Naive thymus-derived CD4-positive, alpha-beta T cell (primary cell): ENCODE measurements at regions of chr11 and their contacts with region 1.

Region 1: GRCh38 chr11:85664615-85665481 is at the start of gene CREBZF:
- DNase-seq: peak; percentile 83 to 96 (median 92)
- ATAC-seq: peak; percentile 85
- H3K4me3 ChIP-seq: peak within 1 kb of the TSS; percentile 97
- H3K4me3 Mint-ChIP-seq: peak within 1 kb of the TSS; percentile 93 to 100 (median 99)
- H3K27ac ChIP-seq: peak within 1 kb of the TSS; percentile 99
- H3K27ac Mint-ChIP-seq: peak within 1 kb of the TSS; percentile 96 to 100 (median 99)
- H3K4me1 ChIP-seq: peaks cover 19 to 31% of the 10 kb centered on the region in 2 donors
- H3K4me1 Mint-ChIP-seq: peaks cover 29 to 55% (median 39%) of the 10 kb centered on the region in 7 donors
- H3K27me3 ChIP-seq: no peaks in the 10 kb centered on the region
- H3K27me3 Mint-ChIP-seq: peaks cover 0 to 5% (median 0%) of the 10 kb centered on the region in 5 donors
- total RNA-seq, gene CREBZF: 56.9 to 114 (median 59.7) TPM

Region 2: DNA sequence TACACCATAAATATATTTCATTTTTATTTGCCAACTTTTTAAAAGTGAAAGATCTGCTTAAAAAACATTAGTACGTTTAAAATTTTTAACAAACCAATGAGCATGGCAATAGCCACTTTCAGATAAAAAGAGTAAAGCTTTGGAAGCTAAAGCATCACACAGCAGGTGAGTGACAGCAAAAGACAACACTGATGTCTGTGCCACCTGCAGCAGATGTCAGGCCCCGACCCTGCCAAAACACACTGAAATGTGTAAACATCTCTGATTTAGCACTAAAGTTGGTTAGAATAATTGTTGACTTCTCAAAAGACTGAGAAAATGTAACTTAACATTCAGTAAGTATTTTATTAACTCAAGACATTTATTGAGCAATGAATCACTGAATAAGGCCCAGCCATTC is 270.6 kb before region 1 on chr11:
- CTCF ChIA-PET with region 1: no interaction called
- POLR2A ChIA-PET with region 1: no interaction called
- intact Hi-C with region 1: no loop called
- DNase-seq: no peak
- ATAC-seq: no peak
- H3K4me3 ChIP-seq: no peak overlapping the region
- H3K4me3 Mint-ChIP-seq: no peak overlapping the region
- H3K27ac ChIP-seq: no peak overlapping the region
- H3K27ac Mint-ChIP-seq: no peak overlapping the region
- H3K4me1 ChIP-seq: no peaks in the 10 kb centered on the region
- H3K4me1 Mint-ChIP-seq: no peaks in the 10 kb centered on the region
- H3K27me3 ChIP-seq: no peaks in the 10 kb centered on the region
- H3K27me3 Mint-ChIP-seq: no peaks in the 10 kb centered on the region

Region 3: DNA sequence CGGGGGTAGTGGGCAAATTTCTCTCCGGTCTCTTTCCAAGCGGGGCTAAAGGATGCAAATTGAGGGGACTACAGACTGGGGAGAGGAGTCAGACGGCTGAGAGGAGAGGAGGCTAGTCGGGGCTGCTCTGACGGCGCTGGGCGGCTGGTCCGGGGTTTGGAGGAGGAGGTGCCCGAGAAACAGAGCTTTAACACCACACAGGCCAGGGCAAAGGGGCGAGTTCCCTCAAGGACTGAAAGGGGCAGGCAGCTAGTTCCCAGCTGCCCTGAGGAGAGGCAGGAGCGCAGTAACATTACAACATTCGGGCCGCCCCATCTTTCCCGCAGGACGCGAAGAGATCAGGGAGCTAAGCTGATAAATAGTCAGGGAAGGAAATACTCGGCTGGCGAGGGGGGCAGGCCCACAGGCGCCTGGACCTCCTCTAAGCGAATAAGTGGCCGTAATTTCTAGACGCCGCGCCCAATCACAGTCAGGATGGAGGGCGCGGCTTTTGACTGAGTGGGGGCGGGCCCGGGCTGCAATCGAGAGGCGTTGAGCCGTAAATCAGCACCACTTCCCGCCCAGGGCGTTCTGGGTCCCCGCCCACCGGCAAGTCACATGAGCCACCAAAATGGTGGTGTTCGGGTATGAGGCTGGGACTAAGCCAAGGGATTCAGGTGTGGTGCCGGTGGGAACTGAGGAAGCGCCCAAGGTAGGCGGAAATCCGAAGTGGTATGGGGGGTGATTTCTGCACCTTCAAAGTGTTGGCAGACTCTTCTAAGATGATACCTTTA is 36.7 kb before region 1 on chr11 and contains the start of gene TMEM126B:
- CTCF ChIA-PET with region 1: no interaction called
- POLR2A ChIA-PET with region 1: interaction called, 32 read pairs
- intact Hi-C with region 1: loop called (anchors 1 kb)
- DNase-seq: peak; percentile 85 to 95 (median 94)
- ATAC-seq: peak; percentile 99
- H3K4me3 ChIP-seq: peak within 1 kb of the TSS; percentile 98
- H3K4me3 Mint-ChIP-seq: peak within 1 kb of the TSS; percentile 84 to 98 (median 94)
- H3K27ac ChIP-seq: peak within 1 kb of the TSS; percentile 85
- H3K27ac Mint-ChIP-seq: peak within 1 kb of the TSS; percentile 89 to 97 (median 94)
- H3K4me1 ChIP-seq: peaks cover 13 to 22% of the 10 kb centered on the region in 2 donors
- H3K4me1 Mint-ChIP-seq: peaks cover 17 to 67% (median 48%) of the 10 kb centered on the region in 7 donors
- H3K27me3 ChIP-seq: no peaks in the 10 kb centered on the region
- H3K27me3 Mint-ChIP-seq: peaks cover 0 to 9% (median 0%) of the 10 kb centered on the region in 5 donors
- total RNA-seq, gene TMEM126B: 22.1 to 50.4 (median 36.4) TPM

Region 4: DNA sequence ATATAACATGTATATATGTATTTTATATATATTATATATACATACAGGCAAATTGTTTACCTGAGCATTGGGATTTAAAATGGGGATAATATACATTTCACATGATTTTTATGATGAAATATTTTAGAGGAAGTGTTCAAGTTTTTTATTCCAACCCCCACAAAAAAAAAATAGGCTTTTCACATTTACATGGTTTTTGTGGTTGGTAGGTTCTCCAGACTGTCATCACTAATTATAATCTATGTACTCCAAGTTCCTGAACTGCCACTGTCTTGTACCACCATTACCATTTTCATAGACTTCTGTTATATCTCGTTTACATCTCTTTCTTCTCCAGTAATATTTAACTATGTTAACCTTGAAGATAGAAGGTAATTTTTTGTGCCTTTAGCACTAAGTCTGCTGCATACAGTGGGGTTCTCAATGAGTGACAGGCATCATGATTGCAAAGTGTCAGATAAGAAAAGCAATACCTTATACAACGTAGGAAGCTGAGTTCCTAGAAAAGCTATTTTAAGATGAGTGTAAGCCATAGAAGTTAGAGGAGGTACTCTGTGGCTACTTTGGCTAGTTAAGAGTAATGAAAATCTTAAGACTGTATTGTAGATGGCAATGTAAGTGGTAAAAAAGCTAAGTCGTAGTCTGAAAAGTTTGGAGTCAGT is 11.9 kb before region 1 on chr11:
- CTCF ChIA-PET with region 1: interaction called, 6 read pairs
- POLR2A ChIA-PET with region 1: interaction called, 207 read pairs
- intact Hi-C with region 1: loop called (anchors 1 kb)
- DNase-seq: no peak
- ATAC-seq: no peak
- H3K4me3 ChIP-seq: no peak overlapping the region
- H3K4me3 Mint-ChIP-seq: no peak overlapping the region
- H3K27ac ChIP-seq: no peak overlapping the region
- H3K27ac Mint-ChIP-seq: peak overlapping the region in 4 of 9 donors; percentile 1 to 18 (median 10)
- H3K4me1 ChIP-seq: peaks cover 6 to 7% of the 10 kb centered on the region in 2 donors
- H3K4me1 Mint-ChIP-seq: peaks cover 10 to 58% (median 47%) of the 10 kb centered on the region in 7 donors
- H3K27me3 ChIP-seq: no peaks in the 10 kb centered on the region
- H3K27me3 Mint-ChIP-seq: no peaks in the 10 kb centered on the region

Region 5: DNA sequence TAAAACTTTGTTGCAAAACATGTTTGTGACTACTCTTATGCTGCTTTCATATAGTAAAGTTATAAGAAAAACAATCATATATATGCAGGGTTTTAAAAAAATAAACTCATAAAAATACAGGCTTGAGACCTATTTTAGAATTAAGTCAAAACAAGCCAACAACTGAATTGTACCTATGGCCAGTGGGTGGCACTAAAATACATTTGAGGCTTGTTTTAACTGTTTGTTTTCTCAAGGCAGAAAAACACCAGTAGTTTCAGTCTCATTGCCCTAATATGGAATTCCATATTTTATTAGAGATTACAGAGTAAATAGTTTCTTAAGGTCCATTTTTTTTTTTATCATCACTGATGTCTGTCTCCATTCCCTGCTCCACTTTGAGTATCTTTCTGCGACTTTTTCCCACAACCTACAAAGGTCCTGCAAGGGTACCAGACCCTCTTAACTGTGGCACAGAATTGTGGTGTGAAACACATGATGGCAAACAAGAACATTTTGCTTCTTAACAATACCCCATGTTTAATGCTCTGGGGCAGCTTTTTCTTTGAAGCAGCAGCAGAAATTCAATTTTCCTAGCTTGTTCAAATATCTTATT is 29.6 kb after region 1 on chr11:
- CTCF ChIA-PET with region 1: interaction called, 3 read pairs
- POLR2A ChIA-PET with region 1: interaction called, 5 read pairs
- intact Hi-C with region 1: loop called in 1 of 2 experiments (anchors 2 kb)
- DNase-seq: peak in 7 of 9 donors; percentile 36 to 63 (median 55)
- ATAC-seq: peak; percentile 70
- H3K4me3 ChIP-seq: no peak overlapping the region
- H3K4me3 Mint-ChIP-seq: no peak overlapping the region
- H3K27ac ChIP-seq: no peak overlapping the region
- H3K27ac Mint-ChIP-seq: peak overlapping the region in 1 of 9 donors; percentile 12
- H3K4me1 ChIP-seq: peaks cover 2 to 7% of the 10 kb centered on the region in 2 donors
- H3K4me1 Mint-ChIP-seq: peaks cover 2 to 52% (median 8%) of the 10 kb centered on the region in 7 donors
- H3K27me3 ChIP-seq: no peaks in the 10 kb centered on the region
- H3K27me3 Mint-ChIP-seq: peaks cover 0 to 3% (median 0%) of the 10 kb centered on the region in 5 donors

Region 6: DNA sequence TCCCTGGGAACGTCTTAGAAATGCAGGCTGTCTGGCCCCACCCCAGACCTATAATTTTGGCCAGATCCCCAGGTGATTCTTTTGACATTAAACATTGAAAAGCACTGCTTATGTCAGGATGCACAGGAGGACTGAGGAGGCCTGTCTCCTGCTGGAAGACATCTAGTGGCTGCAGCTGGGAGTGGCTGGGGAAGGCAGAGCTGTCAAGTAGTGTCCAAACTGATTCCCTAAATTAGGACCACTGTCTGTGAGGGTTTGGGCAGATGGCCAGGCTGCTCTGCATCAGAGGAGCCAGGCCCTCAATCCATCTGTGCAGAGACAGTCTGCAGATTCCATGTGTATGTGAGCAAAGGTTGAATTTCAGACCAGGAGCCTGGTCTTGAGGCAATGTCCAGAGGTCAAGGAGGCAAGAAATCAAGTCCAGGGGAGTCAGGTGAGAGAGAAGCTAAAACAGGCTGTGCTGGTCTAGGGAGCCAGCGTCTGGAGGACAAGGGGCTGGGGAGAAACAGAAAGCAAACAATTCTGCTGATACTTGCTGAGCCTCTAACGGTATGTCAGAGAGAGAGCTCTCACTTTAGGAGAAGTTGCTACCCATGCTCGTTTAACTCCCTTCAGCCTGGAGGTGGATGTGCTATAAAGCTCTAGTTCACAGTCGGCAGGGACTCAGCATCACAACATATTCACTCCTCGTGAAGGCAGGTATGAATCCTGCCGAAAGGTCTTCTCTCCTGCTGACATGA is 161.4 kb after region 1 on chr11:
- CTCF ChIA-PET with region 1: no interaction called
- POLR2A ChIA-PET with region 1: interaction called, 6 read pairs
- intact Hi-C with region 1: loop called (anchors 1 kb)
- DNase-seq: peak in 3 of 9 donors; percentile 24 to 39 (median 28)
- ATAC-seq: no peak
- H3K4me3 ChIP-seq: no peak overlapping the region
- H3K4me3 Mint-ChIP-seq: peak overlapping the region in 9 of 10 donors; percentile 11 to 65 (median 40)
- H3K27ac ChIP-seq: no peak overlapping the region
- H3K27ac Mint-ChIP-seq: peak overlapping the region; percentile 59 to 100 (median 93)
- H3K4me1 ChIP-seq: peaks cover 55 to 57% of the 10 kb centered on the region in 2 donors
- H3K4me1 Mint-ChIP-seq: peaks cover 28 to 72% (median 64%) of the 10 kb centered on the region in 7 donors
- H3K27me3 ChIP-seq: no peaks in the 10 kb centered on the region
- H3K27me3 Mint-ChIP-seq: no peaks in the 10 kb centered on the region

Region 7: GRCh38 chr11:85875142-85875922 is 210.5 kb after region 1 on chr11:
- CTCF ChIA-PET with region 1: no interaction called
- POLR2A ChIA-PET with region 1: no interaction called
- intact Hi-C with region 1: no loop called
- DNase-seq: no peak
- ATAC-seq: no peak
- H3K4me3 ChIP-seq: no peak overlapping the region
- H3K4me3 Mint-ChIP-seq: no peak overlapping the region
- H3K27ac ChIP-seq: no peak overlapping the region
- H3K27ac Mint-ChIP-seq: no peak overlapping the region
- H3K4me1 ChIP-seq: no peaks in the 10 kb centered on the region
- H3K4me1 Mint-ChIP-seq: no peaks in the 10 kb centered on the region
- H3K27me3 ChIP-seq: no peaks in the 10 kb centered on the region
- H3K27me3 Mint-ChIP-seq: peaks cover 0 to 4% (median 0%) of the 10 kb centered on the region in 5 donors